GM10248 (cell line): ENCODE measurements at regions of chr13 and their contacts with region 1.

Region 1: GRCh38 chr13:98672944-98673545 is 79.4 kb downstream of the SLC15A1 start:
- DNase-seq: peak; percentile 81
- CTCF ChIP-seq: peak; percentile 75

Region 2: DNA sequence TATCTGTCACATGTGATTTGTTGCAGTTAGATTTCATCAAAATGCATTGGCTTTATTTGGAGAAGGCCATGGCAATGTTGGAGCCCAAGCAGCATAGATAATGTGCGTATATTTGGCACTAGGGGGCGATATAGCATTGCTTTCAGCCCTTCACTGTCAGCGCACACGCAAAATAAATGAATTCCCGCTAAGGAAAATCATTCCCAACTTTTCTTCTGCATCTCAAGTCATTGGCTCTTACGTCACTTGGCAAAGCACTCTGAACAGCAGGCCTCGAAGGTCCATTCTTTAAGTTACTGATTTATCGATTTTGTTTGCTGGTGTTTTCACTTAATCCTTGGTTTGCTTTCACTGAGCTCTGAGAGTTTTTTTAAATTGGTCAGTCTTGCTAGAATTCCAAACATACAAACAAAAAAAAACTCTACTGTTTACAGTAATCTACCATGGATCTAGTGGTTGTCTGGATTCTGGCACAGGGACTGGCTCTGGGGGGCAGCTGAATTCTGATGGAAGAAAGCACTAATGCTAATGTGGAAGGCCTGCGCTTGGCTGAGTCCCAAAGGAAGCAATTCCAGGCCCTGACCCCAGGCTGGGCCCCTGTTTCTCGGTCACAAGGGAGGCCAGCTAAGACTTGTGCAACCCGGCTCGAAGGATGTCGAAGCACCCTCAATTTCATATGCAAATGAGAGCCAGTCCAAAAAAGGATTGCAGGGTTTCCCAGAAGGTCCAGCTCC is 817.3 kb before region 1 on chr13:
- CTCF ChIA-PET with region 1: interaction called, 13 read pairs
- POLR2A ChIA-PET with region 1: no interaction called
- DNase-seq: peak; percentile 37
- CTCF ChIP-seq: peak; percentile 75

Region 3: DNA sequence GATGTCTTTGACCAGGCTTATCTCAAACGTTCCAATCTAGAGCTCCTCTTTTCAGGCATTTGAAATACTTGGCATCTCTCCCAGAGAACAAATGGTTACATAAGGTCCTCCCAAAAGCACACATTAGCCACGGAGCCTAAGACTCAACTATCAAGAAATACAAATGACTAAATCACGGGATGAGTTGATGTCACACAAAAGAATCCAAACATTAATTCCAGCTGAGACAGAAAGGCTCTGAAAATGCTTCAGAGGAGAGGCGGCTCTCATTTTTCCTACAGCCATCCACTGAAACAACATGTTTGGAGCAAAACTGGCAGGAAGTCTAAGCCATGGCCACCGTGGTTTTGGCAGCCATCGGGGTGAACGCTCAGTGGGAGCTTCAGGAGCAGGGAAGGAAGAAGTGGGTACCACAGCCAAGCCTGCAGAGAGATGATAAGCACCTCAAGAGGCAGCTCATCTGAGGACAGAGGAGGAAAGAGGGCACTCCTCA is 218.6 kb before region 1 on chr13:
- CTCF ChIA-PET with region 1: interaction called, 16 read pairs
- POLR2A ChIA-PET with region 1: no interaction called
- DNase-seq: no peak
- CTCF ChIP-seq: no peak

Region 4: GRCh38 chr13:98688373-98688772 is 15.3 kb after region 1 on chr13:
- CTCF ChIA-PET with region 1: interaction called, 12 read pairs
- POLR2A ChIA-PET with region 1: no interaction called
- DNase-seq: no peak
- CTCF ChIP-seq: no peak

Region 5: DNA sequence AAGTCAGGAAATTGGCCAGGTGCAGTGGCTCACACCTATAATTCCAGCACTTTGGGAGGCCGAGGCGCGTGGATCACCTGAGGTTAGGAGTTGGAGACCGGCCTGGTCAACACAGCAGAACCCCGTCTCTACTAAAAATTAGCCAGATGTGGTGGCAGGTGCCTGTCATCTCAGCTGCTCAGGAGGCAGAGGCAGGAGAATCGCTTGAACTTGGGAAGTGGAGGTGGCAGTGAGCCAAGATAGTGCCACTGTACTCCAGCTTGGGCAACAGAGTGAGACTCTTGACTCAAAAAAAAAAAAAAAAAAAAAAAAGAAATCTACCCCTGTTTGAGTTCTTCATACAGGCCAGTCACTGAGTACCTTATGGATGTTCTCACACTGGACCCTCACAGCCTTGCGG is 37.5 kb after region 1 on chr13:
- CTCF ChIA-PET with region 1: no interaction called
- POLR2A ChIA-PET with region 1: no interaction called
- DNase-seq: no peak
- CTCF ChIP-seq: no peak